ENCODE measurements at regions of chr18 and their contacts with region 1.

Region 1: GRCh38 chr18:11040823-11041656 is 108.3 kb downstream of the PIEZO2 start:
- DNase-seq: peak in 4 of 5 donors; percentile 34 to 68 (median 52)
- H3K4me3 ChIP-seq: no peak overlapping the region
- H3K27ac ChIP-seq: no peak overlapping the region
- H3K4me1 ChIP-seq: no peaks in the 10 kb centered on the region
- H3K27me3 ChIP-seq: no peaks in the 10 kb centered on the region
- CTCF ChIP-seq: peak in 2 of 3 donors; percentile 63 to 79
- EP300 ChIP-seq: no peak
- POLR2A ChIP-seq: no peak

Region 2: GRCh38 chr18:10841203-10841602 is 199.8 kb before region 1 on chr18:
- intact Hi-C with region 1: loop called in 3 of 4 experiments (anchors 5 to 10 kb)
- DNase-seq: no peak
- H3K4me3 ChIP-seq: no peak overlapping the region
- H3K27ac ChIP-seq: no peak overlapping the region
- H3K4me1 ChIP-seq: no peaks in the 10 kb centered on the region
- H3K27me3 ChIP-seq: no peaks in the 10 kb centered on the region
- CTCF ChIP-seq: no peak
- EP300 ChIP-seq: no peak
- POLR2A ChIP-seq: no peak

Region 3: GRCh38 chr18:10846657-10847407 is 194.2 kb before region 1 on chr18:
- intact Hi-C with region 1: loop called (anchors 5 to 10 kb)
- DNase-seq: no peak
- H3K4me3 ChIP-seq: no peak overlapping the region
- H3K27ac ChIP-seq: no peak overlapping the region
- H3K4me1 ChIP-seq: no peaks in the 10 kb centered on the region
- H3K27me3 ChIP-seq: no peaks in the 10 kb centered on the region
- CTCF ChIP-seq: no peak
- EP300 ChIP-seq: no peak
- POLR2A ChIP-seq: no peak

Region 4: GRCh38 chr18:11008505-11008904 is 32.5 kb before region 1 on chr18:
- intact Hi-C with region 1: no loop called
- DNase-seq: no peak
- H3K4me3 ChIP-seq: no peak overlapping the region
- H3K27ac ChIP-seq: no peak overlapping the region
- H3K4me1 ChIP-seq: peaks cover 17% of the 10 kb centered on the region
- H3K27me3 ChIP-seq: no peaks in the 10 kb centered on the region
- CTCF ChIP-seq: no peak
- EP300 ChIP-seq: no peak
- POLR2A ChIP-seq: no peak

Measured in ovary (tissue), 10 donors.